Colonic mucosa (tissue), 4 donors: ENCODE measurements at regions of chr12 and their contacts with region 1.

Region 1: DNA sequence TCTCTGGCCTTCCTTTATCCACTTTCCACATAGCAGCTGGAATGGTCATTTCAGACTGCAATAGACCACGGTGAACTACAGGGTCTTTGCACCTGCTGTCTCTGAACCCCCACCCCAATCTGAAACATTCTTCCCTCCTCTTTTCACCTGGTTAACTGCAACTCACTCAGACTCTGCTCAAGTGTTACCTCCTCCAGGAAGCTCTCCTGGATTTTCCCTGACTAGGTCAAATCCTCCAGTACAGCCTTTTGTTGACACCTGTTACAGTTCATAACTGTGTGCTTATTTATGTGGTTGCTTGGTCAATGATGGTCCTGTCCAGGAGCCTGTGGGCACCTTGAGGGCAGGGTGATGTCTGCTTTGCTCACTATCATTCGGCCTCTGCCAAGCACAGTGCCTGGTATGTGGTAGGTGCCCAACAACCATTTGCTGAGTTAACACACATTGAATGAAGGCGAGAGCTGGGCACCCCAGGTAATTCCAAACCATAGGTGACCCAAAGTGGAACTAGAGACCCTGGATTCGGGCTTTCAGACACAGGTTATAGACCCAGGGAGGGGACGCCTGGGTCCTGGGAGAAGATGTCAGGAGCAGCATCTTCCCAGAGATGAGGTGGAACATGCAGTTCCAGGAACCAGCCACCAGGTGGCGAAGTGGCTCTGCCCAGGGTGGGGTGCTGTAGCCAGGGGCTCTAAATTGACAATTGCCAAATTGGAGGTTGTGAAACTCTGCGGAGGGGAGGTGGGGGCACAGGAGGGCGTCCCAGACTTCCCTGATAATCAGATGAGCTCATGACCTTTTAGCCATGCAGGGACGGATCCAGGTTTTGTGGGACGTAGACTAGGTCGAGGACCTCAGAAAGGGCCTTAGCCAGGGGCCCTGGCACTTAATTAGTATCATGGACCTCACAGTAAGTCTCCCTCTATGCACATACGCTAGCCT is 28.1 kb downstream of the TRPV4 start:
- DNase-seq: peak; percentile 69
- H3K4me3 ChIP-seq: no peak overlapping the region
- H3K27ac ChIP-seq: no peak overlapping the region
- H3K4me1 ChIP-seq: no peaks in the 10 kb centered on the region
- H3K27me3 ChIP-seq: no peaks in the 10 kb centered on the region
- CTCF ChIP-seq: peak; percentile 95

Region 2: DNA sequence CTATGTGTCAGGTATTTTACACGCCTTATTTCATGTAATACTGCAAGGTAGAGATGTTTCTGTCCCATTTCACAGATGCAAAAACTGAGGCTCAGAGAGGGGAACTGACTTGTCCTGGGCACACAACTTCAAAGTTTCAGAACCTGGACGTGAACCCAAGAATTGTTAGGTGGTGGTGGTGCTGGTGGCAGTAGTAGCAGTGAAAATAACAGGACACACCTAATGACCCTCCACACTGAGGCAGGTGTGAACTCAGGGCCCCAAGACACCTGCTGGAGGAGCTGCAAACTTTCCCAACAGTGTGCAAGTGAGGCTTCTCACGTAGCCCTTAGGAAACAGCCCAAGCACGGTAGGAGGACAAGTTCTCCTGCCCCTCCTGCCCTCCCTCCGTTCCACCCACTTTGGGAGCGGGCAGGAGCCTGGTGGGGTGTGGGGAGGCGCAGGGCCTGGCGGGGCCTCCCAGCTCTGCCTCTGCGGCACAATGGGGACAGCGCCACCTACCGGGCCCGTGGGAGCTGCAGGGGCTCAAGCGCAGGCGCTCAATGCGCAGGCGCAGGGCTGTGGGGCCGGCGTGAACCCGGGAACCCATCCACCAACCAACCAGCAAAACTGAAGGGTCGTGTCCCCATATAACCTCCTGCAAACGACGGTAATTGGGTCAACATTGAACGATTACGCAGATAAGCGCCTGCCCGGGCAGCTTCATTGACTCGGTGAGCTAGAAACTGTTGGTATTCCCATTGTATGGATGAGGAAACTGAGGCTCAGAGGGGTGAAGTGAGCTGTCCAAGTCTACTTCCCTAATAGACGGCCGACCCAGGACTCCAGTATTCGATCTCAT is 40.1 kb after region 1 on chr12:
- intact Hi-C with region 1: loop called (anchors 5 kb)
- DNase-seq: peak; percentile 90
- H3K4me3 ChIP-seq: peak overlapping the region; percentile 4
- H3K27ac ChIP-seq: no peak overlapping the region
- H3K4me1 ChIP-seq: no peaks in the 10 kb centered on the region
- H3K27me3 ChIP-seq: no peaks in the 10 kb centered on the region
- CTCF ChIP-seq: peak; percentile 99

Region 3: DNA sequence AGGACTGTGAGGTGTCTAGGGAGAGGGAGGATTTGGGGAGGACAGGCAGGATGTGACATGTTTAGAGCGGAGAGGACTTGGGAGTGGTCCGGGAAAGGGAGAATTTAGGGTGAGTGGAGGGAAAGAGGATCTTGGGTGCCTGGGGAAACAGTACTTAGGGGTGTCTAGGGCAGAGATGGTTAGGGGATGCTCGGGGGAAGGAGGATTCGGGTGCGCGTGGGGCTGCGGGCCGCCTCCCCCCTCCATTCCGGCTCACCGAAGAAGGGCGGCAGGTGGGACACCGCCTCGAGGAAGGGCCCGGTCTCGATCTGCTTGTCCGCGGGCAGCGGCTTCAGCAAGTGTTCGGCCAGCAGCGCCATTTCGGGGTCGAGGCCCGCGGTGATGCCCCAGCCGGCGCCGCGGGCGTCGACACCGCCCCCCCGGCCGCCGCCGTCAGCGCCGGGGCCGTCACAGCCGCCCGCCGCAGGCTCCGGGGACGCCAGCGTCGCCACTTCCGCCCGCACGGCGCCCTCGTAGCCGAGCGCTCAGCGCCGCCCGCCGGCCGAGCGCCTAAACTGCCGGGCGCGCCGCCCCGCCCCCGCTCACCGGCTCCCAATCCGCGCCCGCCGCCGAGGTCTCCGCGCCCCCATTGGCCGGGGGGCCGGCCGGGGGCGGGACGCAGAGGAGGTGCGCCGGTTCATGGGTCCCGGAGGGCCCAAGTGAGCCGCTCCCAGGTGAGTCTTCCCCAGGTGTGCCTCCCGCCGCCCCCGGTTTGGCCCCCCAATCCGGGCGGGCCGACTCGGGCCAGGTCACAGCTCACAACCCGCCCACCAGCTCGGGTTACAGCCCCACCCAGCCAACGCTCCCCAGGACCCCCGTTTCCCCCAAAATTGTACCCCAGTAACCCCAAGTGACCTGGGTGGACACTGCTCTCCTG is 75.2 kb after region 1 on chr12 and contains the start of gene GLTP:
- intact Hi-C with region 1: loop called (anchors 5 kb)
- DNase-seq: peak; percentile 84
- H3K4me3 ChIP-seq: peak within 1 kb of the TSS; percentile 68
- H3K27ac ChIP-seq: peak within 1 kb of the TSS; percentile 26
- H3K4me1 ChIP-seq: peaks cover 5% of the 10 kb centered on the region
- H3K27me3 ChIP-seq: no peaks in the 10 kb centered on the region
- CTCF ChIP-seq: peak; percentile 17
- total RNA-seq, gene GLTP: 72.0 to 76.3 TPM